ENCODE measurements at regions of chr16 and their contacts with region 1.

Region 1: GRCh38 chr16:27367461-27368357 is 34.3 kb upstream of the IL21R start:
- DNase-seq: peak; percentile 89
- H3K4me3 Mint-ChIP-seq: peak overlapping the region; percentile 42
- H3K27ac Mint-ChIP-seq: peak overlapping the region; percentile 68
- H3K4me1 Mint-ChIP-seq: peaks cover 27% of the 10 kb centered on the region
- H3K27me3 Mint-ChIP-seq: no peaks in the 10 kb centered on the region
- CTCF ChIP-seq: peak; percentile 92

Region 2: DNA sequence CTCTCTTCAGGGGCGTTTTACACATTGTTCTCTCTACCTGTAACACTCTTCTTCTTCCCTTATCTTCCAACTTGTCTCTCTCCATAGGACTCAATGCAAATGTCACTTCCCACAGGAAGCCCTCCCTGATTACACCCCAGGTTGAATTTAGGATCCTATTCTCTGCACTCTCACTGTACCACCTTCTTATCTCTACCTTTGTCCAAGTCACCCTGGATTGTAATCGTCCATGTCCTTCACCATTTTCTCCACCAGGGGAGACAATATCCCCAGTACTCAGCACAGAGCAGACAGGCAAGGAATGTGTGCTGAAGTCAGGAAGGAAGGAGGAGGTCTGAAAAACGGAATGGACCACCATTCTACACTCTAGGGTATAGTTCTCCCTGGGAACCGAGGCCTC is 286.8 kb before region 1 on chr16:
- CTCF ChIA-PET with region 1: interaction called, 3 read pairs
- intact Hi-C with region 1: loop called (anchors 10 kb)
- DNase-seq: peak; percentile 13
- H3K4me3 Mint-ChIP-seq: no peak overlapping the region
- H3K27ac Mint-ChIP-seq: no peak overlapping the region
- H3K4me1 Mint-ChIP-seq: no peaks in the 10 kb centered on the region
- H3K27me3 Mint-ChIP-seq: peaks cover 91% of the 10 kb centered on the region
- CTCF ChIP-seq: peak; percentile 49

Region 3: GRCh38 chr16:27154705-27155521 is 212.8 kb before region 1 on chr16:
- CTCF ChIA-PET with region 1: interaction called, 4 read pairs
- intact Hi-C with region 1: loop called (anchors 1 kb)
- DNase-seq: peak; percentile 74
- H3K4me3 Mint-ChIP-seq: no peak overlapping the region
- H3K27ac Mint-ChIP-seq: no peak overlapping the region
- H3K4me1 Mint-ChIP-seq: peaks cover 12% of the 10 kb centered on the region
- H3K27me3 Mint-ChIP-seq: peaks cover 71% of the 10 kb centered on the region
- CTCF ChIP-seq: peak; percentile 99

Region 4: DNA sequence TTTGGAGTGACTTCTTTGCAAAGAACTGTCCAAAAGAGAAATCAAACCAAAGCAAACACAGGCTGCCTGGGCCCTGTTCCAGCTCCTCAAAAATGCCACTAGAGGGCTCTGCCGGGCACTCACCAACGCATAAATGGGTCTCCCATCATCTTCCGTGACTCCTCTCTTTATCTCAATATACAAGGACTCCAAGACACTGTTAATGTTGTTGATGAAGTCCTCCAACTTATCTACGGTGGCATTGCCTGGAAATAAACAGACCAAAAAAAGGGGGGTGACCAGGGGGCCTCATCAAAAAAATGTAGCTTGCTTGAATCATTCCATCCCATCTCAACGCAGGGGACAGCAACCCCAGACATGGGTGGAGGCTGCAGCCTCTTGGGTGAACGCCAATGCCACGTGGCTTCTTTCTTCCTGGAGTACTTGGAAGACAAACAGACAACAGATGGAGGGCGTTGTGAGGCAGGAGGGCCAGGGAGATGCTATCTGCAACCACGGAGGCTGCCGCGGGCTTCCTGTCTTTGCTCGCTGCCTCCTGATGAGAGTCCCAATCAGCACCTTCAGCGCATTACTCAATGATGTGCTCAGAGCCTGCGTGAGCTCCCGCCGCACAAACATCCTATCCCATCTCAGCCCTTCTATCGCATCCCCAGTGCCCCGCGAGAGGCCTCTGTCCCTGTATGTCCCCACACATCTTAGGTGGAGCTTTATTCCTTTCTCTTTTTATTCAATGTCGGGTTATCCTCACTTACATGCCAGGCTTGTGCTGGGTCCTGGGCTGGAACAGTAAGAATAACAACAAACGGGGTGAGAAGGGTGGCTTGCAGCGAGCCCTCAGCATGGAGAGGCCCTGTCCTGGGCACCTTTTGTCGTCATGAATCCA is 132.4 kb before region 1 on chr16:
- CTCF ChIA-PET with region 1: interaction called, 43 read pairs
- intact Hi-C with region 1: loop called (anchors 1 kb)
- DNase-seq: peak; percentile 53
- H3K4me3 Mint-ChIP-seq: no peak overlapping the region
- H3K27ac Mint-ChIP-seq: peak overlapping the region; percentile 57
- H3K4me1 Mint-ChIP-seq: peaks cover 24% of the 10 kb centered on the region
- H3K27me3 Mint-ChIP-seq: no peaks in the 10 kb centered on the region
- CTCF ChIP-seq: peak; percentile 69

Region 5: DNA sequence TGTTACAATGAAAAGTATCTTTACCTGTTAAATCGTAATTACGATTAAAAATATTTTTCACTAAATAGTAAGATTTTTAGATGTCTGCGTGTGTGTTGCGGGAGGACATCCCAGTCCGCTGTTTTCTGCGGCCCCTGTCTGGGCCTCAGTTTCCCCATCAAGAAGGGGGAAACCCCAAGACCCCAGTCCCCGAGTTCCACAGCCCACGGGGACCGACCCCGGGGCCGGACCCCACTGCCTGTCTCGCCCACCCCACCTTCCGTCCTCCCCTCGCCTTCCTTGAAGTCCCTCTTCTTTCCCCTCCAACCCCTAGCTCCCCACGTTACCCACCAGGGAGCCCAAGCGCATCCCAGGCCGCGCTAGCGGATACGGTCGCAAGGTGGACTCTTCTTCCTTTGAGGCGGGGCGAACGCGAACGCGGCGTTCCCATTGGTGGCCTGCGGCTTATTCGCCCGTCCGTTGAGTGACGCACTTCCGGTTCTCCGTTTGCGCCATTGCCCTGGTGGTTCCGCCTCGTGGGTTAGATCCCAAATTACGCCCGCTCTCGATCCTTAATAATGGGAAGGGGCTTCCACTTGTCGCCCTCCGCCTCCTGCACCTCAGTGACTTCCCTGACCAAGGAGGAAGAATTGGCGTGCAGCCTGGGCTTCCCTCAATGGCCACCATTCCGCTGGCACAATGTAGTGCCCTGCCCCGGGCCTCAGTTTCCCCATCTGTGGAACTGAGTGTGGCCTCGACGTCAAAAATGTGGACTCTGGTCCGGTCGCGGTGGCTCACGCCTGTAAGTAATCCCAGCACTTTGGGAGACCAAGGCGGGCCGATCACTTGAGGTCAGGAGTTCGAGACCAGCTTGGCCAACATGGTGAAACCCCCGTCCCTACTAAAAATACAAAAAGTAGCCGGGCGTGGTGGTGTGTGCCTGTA is 99.1 kb before region 1 on chr16 and contains the start of gene NSMCE1:
- CTCF ChIA-PET with region 1: interaction called, 3 read pairs
- intact Hi-C with region 1: loop called (anchors 2 kb)
- DNase-seq: peak; percentile 98
- H3K4me3 Mint-ChIP-seq: peak within 1 kb of the TSS; percentile 91
- H3K27ac Mint-ChIP-seq: peak within 1 kb of the TSS; percentile 97
- H3K4me1 Mint-ChIP-seq: peaks cover 57% of the 10 kb centered on the region
- H3K27me3 Mint-ChIP-seq: no peaks in the 10 kb centered on the region
- CTCF ChIP-seq: peak; percentile 32
- total RNA-seq, gene NSMCE1: 74.9 and 83.2 TPM in 2 replicates

Region 6: DNA sequence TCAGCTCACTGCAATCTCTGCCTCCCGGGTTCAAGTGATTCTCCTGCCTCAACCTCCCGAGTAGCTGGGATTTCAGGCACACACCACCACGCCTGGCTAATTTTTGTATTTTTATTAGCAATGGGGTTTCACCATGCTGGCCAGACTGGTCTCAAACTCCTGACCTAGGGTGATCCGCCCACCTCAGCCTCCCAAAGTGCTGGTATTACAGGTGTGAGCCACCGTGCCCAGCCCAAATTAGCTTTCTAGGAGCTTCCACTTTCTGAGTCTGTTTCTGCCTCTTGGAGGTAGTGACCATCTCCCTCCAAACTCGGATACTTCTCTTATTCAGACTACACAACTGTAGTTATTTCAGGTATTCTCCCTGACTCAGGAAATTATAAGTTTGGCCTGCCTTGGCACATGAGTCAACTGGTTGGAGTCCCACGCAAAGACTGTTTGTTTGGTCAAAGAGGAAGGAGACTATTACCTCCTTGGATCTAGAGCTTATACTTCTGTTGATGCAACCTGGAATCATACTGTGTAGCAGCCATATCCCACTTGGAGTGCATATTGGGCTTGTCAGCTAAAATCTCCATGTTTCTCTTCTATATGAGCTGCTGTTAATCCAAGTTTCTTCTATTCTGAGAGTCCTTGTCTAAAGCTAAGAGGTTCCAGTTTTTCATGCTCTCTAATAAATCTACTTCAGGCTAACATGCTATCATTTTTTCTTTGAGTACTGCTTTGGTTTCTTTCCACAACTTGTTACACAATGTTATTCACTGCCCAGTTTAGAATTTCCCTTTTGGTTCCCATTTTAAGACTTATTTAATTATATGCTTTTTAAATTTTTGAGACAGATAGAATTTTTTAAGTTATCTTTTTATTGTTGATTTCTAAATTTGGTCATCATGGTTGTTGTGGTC is 46.4 kb before region 1 on chr16:
- CTCF ChIA-PET with region 1: interaction called, 12 read pairs
- intact Hi-C with region 1: loop called (anchors 2 kb)
- DNase-seq: no peak
- H3K4me3 Mint-ChIP-seq: no peak overlapping the region
- H3K27ac Mint-ChIP-seq: peak overlapping the region; percentile 94
- H3K4me1 Mint-ChIP-seq: peaks cover 94% of the 10 kb centered on the region
- H3K27me3 Mint-ChIP-seq: no peaks in the 10 kb centered on the region
- CTCF ChIP-seq: no peak

Measured in Calu3 (cell line).